ENCODE measurements at regions of chr19 and their contacts with region 1.

Region 1: DNA sequence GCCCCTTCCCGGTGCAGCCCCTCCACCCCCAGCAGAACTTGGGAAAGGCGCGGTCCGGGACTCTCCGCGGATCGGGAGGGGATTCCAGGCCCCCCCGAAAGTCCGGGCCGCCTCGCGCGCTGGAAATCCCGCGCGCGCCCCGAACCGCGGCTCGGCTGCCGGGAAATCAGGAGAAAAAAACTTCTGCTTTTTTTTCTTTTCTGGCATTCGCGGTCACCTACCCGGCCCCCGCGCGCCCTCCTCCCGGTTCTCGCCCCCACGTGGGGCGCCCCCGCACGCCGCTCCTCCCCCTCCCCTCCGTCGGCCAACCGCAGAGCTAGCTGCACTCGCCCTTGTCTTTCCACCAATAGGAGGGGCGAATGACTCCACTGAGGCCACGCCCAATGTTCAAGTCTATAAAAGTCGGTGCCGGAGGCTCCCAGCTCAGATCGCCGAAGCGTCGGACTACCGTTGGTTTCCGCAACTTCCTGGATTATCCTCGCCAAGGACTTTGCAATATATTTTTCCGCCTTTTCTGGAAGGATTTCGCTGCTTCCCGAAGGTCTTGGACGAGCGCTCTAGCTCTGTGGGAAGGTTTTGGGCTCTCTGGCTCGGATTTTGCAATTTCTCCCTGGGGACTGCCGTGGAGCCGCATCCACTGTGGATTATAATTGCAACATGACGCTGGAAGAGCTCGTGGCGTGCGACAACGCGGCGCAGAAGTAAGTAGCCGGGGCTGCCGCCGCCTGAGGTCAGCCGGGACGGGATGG is at the start of gene GADD45B:
- DNase-seq: peak; percentile 98
- ATAC-seq: peak; percentile 52
- H3K4me3 Mint-ChIP-seq: peak within 1 kb of the TSS; percentile 86
- H3K27ac Mint-ChIP-seq: peak within 1 kb of the TSS; percentile 95
- H3K4me1 Mint-ChIP-seq: peaks cover 23% of the 10 kb centered on the region
- H3K27me3 Mint-ChIP-seq: peaks cover 2% of the 10 kb centered on the region
- total RNA-seq, gene GADD45B: 59.2 to 61.4 TPM

Region 2: DNA sequence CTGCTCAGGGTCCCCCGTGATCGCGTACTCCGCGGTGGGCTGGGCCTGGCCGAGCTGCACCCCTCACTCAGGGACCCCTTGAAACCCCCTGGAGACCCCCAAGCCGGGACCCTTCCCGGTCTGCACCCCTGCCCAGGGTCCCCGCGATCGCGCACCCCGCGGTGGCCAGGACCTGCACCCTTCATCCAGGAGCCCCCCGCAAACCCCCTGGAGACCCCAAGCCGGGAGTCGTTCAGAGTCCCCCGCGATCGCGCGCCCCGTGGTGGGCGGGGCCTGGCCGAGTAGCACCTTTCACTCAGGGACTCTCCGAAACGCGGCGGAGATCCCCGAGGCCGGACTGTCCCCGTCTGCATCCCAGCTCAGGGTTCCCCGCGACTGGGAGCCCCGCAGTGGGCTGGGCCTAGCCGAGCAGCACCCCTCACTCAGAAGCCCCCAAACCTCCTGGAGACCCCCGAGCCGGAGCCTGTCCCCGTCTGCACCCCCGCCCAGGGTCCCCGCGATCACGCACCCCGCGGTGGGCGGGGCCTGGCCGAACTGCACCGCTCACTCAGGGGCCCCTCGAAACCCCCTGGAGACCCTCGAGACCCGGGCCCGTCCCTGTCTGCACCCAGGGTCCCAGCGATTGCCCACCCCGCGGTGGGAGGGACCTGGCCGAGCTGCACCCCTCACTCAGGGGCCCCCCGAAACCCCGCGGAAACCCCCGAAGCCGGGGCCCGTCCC is 19.9 kb before region 1 on chr19:
- CTCF ChIA-PET with region 1: interaction called, 8 read pairs
- POLR2A ChIA-PET with region 1: interaction called, 46 read pairs
- DNase-seq: peak; percentile 62
- ATAC-seq: peak; percentile 61
- H3K4me3 Mint-ChIP-seq: peak overlapping the region; percentile 85
- H3K27ac Mint-ChIP-seq: peak overlapping the region; percentile 86
- H3K4me1 Mint-ChIP-seq: peaks cover 28% of the 10 kb centered on the region
- H3K27me3 Mint-ChIP-seq: no peaks in the 10 kb centered on the region

Region 3: GRCh38 chr19:2507109-2507508 is 31.2 kb after region 1 on chr19:
- CTCF ChIA-PET with region 1: interaction called, 9 read pairs
- POLR2A ChIA-PET with region 1: interaction called, 30 read pairs
- DNase-seq: peak; percentile 61
- ATAC-seq: peak; percentile 44
- H3K4me3 Mint-ChIP-seq: peak overlapping the region; percentile 52
- H3K27ac Mint-ChIP-seq: peak overlapping the region; percentile 86
- H3K4me1 Mint-ChIP-seq: peaks cover 28% of the 10 kb centered on the region
- H3K27me3 Mint-ChIP-seq: no peaks in the 10 kb centered on the region

Region 4: GRCh38 chr19:2552859-2553258 is 77.0 kb after region 1 on chr19:
- CTCF ChIA-PET with region 1: interaction called, 27 read pairs
- POLR2A ChIA-PET with region 1: interaction called, 35 read pairs
- DNase-seq: peak; percentile 84
- ATAC-seq: peak; percentile 86
- H3K4me3 Mint-ChIP-seq: peak overlapping the region; percentile 67
- H3K27ac Mint-ChIP-seq: peak overlapping the region; percentile 86
- H3K4me1 Mint-ChIP-seq: peaks cover 64% of the 10 kb centered on the region
- H3K27me3 Mint-ChIP-seq: no peaks in the 10 kb centered on the region

Region 5: GRCh38 chr19:2602391-2603181 is 126.7 kb after region 1 on chr19:
- CTCF ChIA-PET with region 1: interaction called, 19 read pairs
- POLR2A ChIA-PET with region 1: interaction called, 108 read pairs
- DNase-seq: no peak
- ATAC-seq: no peak
- H3K4me3 Mint-ChIP-seq: no peak overlapping the region
- H3K27ac Mint-ChIP-seq: no peak overlapping the region
- H3K4me1 Mint-ChIP-seq: peaks cover 22% of the 10 kb centered on the region
- H3K27me3 Mint-ChIP-seq: no peaks in the 10 kb centered on the region

Region 6: GRCh38 chr19:2636897-2637683 is 161.2 kb after region 1 on chr19:
- CTCF ChIA-PET with region 1: interaction called, 25 read pairs
- POLR2A ChIA-PET with region 1: interaction called, 20 read pairs
- DNase-seq: peak; percentile 84
- ATAC-seq: peak; percentile 84
- H3K4me3 Mint-ChIP-seq: no peak overlapping the region
- H3K27ac Mint-ChIP-seq: no peak overlapping the region
- H3K4me1 Mint-ChIP-seq: peaks cover 14% of the 10 kb centered on the region
- H3K27me3 Mint-ChIP-seq: peaks cover 4% of the 10 kb centered on the region

Measured in activated CD8-positive, alpha-beta T cell treated with anti-CD3 and anti-CD28 coated beads, Interleukin-2, amount 10 ng/mL, durations not matched to agents 7 days and 5 days (primary cell).